Adrenal gland (tissue), 19 donors: ENCODE measurements at regions of chr5 and their contacts with region 1.

Region 1: DNA sequence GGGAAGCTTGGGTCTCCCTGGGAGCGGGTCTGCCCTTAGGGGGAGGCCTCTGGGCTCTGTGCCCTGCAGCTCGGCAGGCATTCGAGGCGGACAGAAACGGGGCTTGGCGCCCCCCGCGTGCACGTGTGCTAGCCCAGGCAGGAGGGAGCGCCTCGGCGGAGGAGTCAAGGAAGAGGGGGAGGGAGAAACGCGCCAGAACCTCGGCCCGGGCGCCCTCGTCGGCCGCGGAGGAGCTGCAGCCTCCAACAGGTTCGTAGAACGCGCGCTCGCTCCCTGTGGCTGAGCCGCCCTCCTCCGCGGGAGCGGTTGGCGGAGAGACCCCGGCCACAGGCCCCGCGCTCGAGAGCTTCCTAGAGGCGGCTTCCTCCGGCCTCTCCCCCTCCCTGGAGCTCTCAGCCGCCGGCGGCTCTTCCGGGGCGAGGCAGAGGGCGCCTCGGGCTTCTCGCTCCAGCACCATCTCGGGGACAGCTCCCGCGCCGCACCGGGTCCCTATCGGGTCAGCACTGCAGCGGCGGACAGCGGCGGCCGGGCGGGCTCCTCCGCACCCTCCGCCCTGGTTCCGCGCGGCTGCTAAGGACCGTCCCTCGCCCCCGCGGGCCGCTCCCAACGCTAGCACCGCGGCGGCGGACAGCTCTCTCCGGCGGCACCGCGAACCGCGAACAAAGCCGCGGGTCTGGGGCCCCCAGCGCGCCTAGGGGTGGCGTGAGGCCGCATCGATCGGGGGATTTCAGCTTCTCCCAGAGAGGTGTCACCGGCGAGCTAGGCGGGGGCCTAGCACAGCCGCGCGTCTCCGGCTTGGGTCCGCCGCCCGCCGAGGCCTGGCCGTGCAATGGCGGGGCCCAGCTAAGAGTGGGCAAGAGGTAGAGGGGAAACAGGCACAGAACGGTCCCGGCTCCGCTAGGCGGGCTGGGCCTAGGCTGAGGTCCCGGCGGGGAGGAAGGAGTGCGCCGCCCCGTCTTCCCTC is 74.6 kb upstream of the CPLX2 start:
- DNase-seq: peak; percentile 84 to 92 (median 88)
- H3K4me3 ChIP-seq: peak overlapping the region in 1 of 4 donors; percentile 16
- H3K27ac ChIP-seq: peak overlapping the region in 1 of 5 donors; percentile 64
- H3K4me1 ChIP-seq: peaks cover 8 to 11% of the 10 kb centered on the region in 2 donors
- H3K27me3 ChIP-seq: peaks cover 6% of the 10 kb centered on the region
- CTCF ChIP-seq: no peak
- POLR2A ChIP-seq: no peak

Region 2: GRCh38 chr5:175216991-175217390 is 579.8 kb before region 1 on chr5:
- intact Hi-C with region 1: no loop called
- DNase-seq: peak in 1 of 7 donors; percentile 20
- H3K4me3 ChIP-seq: no peak overlapping the region
- H3K27ac ChIP-seq: peak overlapping the region in 1 of 5 donors; percentile 6
- H3K4me1 ChIP-seq: no peaks in the 10 kb centered on the region
- H3K27me3 ChIP-seq: no peaks in the 10 kb centered on the region
- CTCF ChIP-seq: no peak
- POLR2A ChIP-seq: no peak

Region 3: DNA sequence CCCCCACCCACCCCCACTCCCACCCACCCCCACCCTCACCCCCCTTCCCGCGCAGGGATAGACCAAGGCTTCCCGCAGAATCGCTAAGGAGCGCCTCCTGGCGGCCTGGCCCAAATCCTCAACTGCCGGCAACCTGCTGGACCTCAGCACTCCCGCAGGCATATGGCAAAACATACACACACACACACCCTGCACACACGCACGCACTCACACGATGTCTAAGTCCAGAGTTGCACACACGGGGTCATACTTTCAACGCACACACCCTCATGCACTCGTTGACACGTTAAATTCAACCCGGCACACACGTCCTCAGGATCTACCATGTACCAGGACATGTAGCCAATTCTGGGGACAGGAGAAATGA is 76.3 kb after region 1 on chr5:
- intact Hi-C with region 1: loop called in 1 of 2 experiments (anchors 5 kb)
- DNase-seq: peak in 2 of 7 donors; percentile 40 to 81
- H3K4me3 ChIP-seq: no peak overlapping the region
- H3K27ac ChIP-seq: no peak overlapping the region
- H3K4me1 ChIP-seq: peaks cover 0 to 3% of the 10 kb centered on the region in 2 donors
- H3K27me3 ChIP-seq: peaks cover 25% of the 10 kb centered on the region
- CTCF ChIP-seq: peak in 2 of 6 experiments; percentile 22 to 24
- POLR2A ChIP-seq: no peak